ENCODE measurements at regions of chr7 and their contacts with region 1.

Region 1: GRCh38 chr7:80428161-80429054 is 83.5 kb downstream of the GNAT3 start:
- DNase-seq: peak; percentile 75
- H3K4me3 ChIP-seq: no peak overlapping the region
- H3K27ac ChIP-seq: no peak overlapping the region
- H3K4me1 ChIP-seq: 0 out of 2 replicates have a peak, but pooled peaks cover 3% of the 10 kb centered on the region
- H3K27me3 ChIP-seq: no peaks in the 10 kb centered on the region

Region 2: DNA sequence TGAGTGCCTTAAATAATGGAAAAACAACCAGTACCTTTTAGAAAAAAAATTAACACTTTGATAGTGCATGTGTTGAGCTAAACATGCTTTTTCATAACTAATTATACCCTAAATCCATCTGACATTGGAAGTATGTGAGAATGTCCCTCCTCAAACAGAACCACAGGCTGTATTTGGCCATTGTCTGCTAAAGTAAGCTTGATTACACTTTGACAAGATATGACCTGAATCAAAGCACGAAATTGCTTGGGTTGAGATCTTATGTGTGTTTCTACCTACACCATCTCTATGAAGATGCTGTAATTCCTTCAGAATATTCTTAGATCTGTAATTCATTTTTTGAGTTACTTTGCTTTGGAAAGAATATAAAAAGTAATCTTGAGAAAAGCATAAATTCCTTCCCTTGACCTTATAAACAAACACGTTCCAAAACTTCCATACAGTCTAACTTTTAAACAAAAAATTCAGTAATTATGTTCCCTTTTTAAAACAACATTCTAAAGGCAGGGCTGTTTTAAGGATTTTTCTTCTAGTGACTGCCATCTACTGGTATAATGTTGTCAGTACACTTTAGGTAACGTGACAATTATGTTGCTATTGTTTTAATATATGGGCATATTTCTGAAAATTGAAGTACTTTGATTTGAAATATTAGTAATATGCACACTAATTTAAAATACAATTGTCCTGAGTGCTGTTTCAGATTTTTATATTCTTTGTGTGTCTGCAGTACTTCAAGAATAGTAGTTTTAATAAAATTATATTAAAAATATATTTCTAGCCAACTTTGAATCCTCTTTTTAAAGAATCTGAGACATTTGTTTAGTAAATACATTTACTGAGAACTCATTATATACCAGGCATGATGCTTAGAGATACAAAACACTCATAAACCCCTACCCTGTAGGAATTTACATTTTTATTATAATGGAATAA is 231.0 kb after region 1 on chr7:
- in situ Hi-C with region 1: loop called (anchors 5 kb)
- DNase-seq: peak; percentile 53
- H3K4me3 ChIP-seq: no peak overlapping the region
- H3K27ac ChIP-seq: no peak overlapping the region
- H3K4me1 ChIP-seq: 0 out of 2 replicates have a peak, but pooled peaks cover 7% of the 10 kb centered on the region
- H3K27me3 ChIP-seq: no peaks in the 10 kb centered on the region

Region 3: GRCh38 chr7:80883188-80884025 is 455.0 kb after region 1 on chr7:
- in situ Hi-C with region 1: no loop called
- DNase-seq: peak; percentile 98
- H3K4me3 ChIP-seq: peak overlapping the region; percentile 28
- H3K27ac ChIP-seq: peak overlapping the region; percentile 80
- H3K4me1 ChIP-seq: peaks cover 80% of the 10 kb centered on the region
- H3K27me3 ChIP-seq: no peaks in the 10 kb centered on the region

Region 4: GRCh38 chr7:81469869-81470723 is 1041.7 kb after region 1 on chr7:
- in situ Hi-C with region 1: loop called (anchors 25 kb)
- DNase-seq: peak; percentile 84
- H3K4me3 ChIP-seq: no peak overlapping the region
- H3K27ac ChIP-seq: no peak overlapping the region
- H3K4me1 ChIP-seq: no peaks in the 10 kb centered on the region; the same call in 1 of the 2 replicates
- H3K27me3 ChIP-seq: no peaks in the 10 kb centered on the region